SK-N-SH (cell line): ENCODE measurements at regions of chr7 and their contacts with region 1.

Region 1: DNA sequence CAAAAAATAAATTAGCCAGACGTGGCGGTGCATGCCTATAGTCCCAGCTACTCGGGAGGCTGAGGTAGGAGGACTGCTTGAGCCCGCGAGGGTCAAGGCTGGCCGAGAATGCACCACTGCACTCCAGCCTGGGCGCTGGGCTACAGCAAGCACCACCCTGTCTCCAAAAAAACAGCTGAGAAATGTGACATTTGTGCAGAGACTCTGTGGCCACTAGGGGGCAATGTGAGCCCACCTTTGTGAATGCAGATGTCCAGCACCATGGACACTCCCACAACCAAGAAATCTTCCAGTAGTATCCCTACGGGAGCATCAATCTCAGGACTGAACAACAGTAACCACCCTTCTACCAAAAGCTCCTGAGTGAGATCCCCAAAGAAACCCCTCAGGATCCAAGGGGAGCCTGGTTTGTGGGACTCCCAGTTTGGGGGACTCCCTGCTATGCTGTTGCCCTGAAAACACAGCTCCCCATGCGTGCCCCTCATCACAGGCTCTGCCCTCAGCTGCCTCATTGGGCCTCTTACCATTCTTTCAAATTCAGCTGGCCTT is 6.2 kb upstream of the AHCYL2 start:
- DNase-seq: peak; percentile 90
- H3K4me3 ChIP-seq: peak overlapping the region in 1 of 2 experiments; percentile 25; a peak in 1 of 4 replicates
- H3K27ac ChIP-seq: no peak overlapping the region
- H3K4me1 ChIP-seq: peaks cover 0 to 8% of the 10 kb centered on the region in 2 experiments; a peak in 1 of 4 replicates
- H3K27me3 ChIP-seq: no peaks in the 10 kb centered on the region
- CTCF ChIP-seq: peak; percentile 99
- EP300 ChIP-seq: no peak
- RAD21 ChIP-seq: peak; percentile 99

Region 2: DNA sequence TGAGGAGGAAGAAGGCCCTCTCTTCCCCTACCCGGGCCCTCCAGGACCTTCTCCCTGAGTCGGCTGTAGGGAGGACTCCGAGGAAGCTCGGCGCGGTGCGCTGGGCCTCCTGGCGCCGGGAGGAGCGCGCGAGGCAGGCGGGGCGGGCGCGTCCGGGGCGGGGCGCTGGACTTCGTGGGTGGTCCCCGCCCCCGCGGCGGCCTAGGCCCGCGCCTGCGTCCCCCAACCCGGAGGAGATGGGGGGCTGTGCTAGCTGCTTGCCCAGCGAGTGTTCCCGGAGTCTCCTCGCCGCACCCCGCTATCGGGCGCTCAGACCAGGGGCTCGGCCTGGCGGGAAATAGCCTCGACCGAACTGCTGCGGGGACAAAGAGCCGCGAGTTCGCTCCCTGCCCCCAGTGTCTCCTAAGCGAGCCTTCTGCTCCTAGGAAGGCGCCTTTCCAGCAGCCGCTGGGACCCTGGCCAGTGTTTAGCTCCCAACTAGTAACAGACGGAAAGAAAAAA is 49.4 kb before region 1 on chr7:
- CTCF ChIA-PET with region 1: interaction called, 385 read pairs
- POLR2A ChIA-PET with region 1: interaction called, 6 read pairs
- DNase-seq: no peak
- H3K4me3 ChIP-seq: no peak overlapping the region
- H3K27ac ChIP-seq: no peak overlapping the region
- H3K4me1 ChIP-seq: no peaks in the 10 kb centered on the region
- H3K27me3 ChIP-seq: no peaks in the 10 kb centered on the region
- CTCF ChIP-seq: no peak
- EP300 ChIP-seq: no peak
- RAD21 ChIP-seq: no peak

Region 3: GRCh38 chr7:129252128-129252527 is 33.5 kb after region 1 on chr7:
- CTCF ChIA-PET with region 1: interaction called, 24 read pairs
- POLR2A ChIA-PET with region 1: no interaction called
- DNase-seq: peak; percentile 36
- H3K4me3 ChIP-seq: no peak overlapping the region
- H3K27ac ChIP-seq: no peak overlapping the region
- H3K4me1 ChIP-seq: peaks cover 0 to 6% of the 10 kb centered on the region in 2 experiments; a peak in 3 of 4 replicates
- H3K27me3 ChIP-seq: no peaks in the 10 kb centered on the region
- CTCF ChIP-seq: no peak
- EP300 ChIP-seq: peak in 1 of 2 experiments; percentile 12; a peak in 1 of 4 replicates
- RAD21 ChIP-seq: no peak

Region 4: GRCh38 chr7:129308047-129308446 is 89.5 kb after region 1 on chr7:
- CTCF ChIA-PET with region 1: interaction called, 68 read pairs
- POLR2A ChIA-PET with region 1: no interaction called
- DNase-seq: no peak
- H3K4me3 ChIP-seq: no peak overlapping the region
- H3K27ac ChIP-seq: no peak overlapping the region
- H3K4me1 ChIP-seq: no peaks in the 10 kb centered on the region
- H3K27me3 ChIP-seq: no peaks in the 10 kb centered on the region
- CTCF ChIP-seq: no peak
- EP300 ChIP-seq: no peak
- RAD21 ChIP-seq: no peak

Region 5: DNA sequence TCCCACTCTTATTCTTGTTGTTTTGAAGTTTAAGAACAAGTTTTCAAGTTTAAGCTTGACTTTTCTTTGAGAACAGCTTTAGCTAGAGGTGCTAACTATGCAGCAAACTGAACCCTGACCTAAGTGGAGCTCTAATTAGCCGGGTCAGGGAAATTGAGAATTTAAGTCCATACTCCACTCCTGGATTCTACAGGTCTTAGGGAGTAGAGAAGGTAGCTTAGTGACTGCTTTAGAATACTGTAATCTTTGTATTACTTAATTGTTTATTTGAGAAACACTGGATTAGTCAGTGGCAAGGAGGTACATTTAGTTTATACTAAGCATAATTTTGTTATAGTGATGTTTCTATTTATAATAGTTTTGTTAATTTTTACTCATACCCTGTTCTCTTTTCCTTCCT is 141.1 kb after region 1 on chr7:
- CTCF ChIA-PET with region 1: interaction called, 24 read pairs
- POLR2A ChIA-PET with region 1: no interaction called
- DNase-seq: no peak
- H3K4me3 ChIP-seq: no peak overlapping the region
- H3K27ac ChIP-seq: no peak overlapping the region
- H3K4me1 ChIP-seq: no peaks in the 10 kb centered on the region
- H3K27me3 ChIP-seq: no peaks in the 10 kb centered on the region
- CTCF ChIP-seq: no peak
- EP300 ChIP-seq: no peak
- RAD21 ChIP-seq: no peak

Region 6: DNA sequence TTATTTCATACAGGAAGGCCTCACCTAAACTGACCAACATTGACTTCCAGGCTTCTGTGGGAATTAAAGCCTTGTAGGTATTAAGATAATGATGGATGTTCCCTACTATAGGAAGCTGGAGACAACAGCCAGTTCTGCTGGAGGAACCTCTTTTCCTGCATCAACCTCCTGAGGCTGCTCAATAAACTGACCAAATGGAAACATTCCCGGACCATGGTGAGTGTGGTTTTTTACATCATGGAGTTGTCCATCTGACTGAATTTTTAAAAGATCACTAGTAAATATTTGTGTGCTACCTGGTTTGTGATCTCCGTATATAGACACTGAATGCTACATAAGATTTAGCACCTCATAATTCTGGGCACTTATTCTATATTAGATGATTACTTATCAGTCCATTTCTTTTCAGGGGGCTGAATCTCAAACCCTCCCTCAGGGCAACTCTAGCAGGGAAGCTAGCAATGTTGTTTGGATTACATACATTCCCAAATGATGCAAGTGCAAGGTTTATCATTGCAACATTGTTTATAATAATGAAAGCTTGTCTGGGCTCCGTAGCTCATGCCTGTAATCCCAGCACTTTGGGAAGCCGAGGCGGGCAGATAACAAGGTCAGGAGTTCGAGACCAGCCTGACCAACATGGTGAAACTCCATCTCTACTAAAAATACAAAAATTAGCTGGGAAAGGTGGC is 262.2 kb after region 1 on chr7:
- CTCF ChIA-PET with region 1: interaction called, 19 read pairs
- POLR2A ChIA-PET with region 1: no interaction called
- DNase-seq: no peak
- H3K4me3 ChIP-seq: no peak overlapping the region
- H3K27ac ChIP-seq: no peak overlapping the region
- H3K4me1 ChIP-seq: no peaks in the 10 kb centered on the region
- H3K27me3 ChIP-seq: no peaks in the 10 kb centered on the region
- CTCF ChIP-seq: no peak
- EP300 ChIP-seq: no peak
- RAD21 ChIP-seq: no peak